Esophagus muscularis mucosa (tissue), 4 donors: ENCODE measurements at regions of chr3 and their contacts with region 1.

Region 1: DNA sequence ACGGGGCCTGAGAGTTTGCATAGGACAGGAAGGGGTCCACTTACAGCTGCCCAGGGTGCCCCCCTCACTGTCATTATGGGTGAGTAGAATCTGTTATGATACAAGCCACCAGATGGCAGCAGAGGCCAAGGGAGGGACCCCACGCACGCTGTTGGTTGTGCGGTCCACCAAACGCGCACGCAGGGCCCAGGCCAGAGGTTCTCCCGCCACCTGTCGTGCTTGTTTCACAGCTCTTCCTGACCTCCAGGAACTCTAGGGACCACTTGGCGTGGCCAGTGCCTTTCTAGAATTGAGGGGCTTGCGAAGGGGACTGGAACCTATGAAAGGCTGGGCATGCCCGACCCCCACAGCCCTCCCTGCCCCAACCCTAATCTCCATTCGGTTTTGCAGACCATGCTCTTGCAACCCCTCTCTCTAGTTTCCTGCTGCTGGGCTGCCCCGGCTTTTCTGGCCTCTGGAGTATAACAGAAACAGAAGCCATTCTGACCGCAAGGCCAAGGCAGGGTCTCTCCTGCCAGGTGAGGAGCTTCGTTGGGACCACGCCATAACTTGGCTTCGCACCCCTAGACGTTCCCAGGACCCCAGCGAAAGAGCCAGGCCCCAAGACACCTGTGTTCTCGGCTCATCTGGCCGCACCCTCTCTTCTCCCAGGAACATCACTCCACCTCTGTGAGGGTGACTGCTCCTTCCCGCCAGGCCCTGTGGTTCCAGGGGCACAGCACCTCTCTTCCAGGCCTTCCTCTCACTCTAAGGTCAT is 46.0 kb downstream of the ALDH1L1 start:
- DNase-seq: peak; percentile 92
- H3K4me3 ChIP-seq: no peak overlapping the region
- H3K27ac ChIP-seq: no peak overlapping the region
- H3K4me1 ChIP-seq: peaks cover 0 to 8% (median 6%) of the 10 kb centered on the region in 4 donors
- H3K27me3 ChIP-seq: no peaks in the 10 kb centered on the region
- CTCF ChIP-seq: peak; percentile 81 to 91 (median 85)
- EP300 ChIP-seq: no peak
- POLR2A ChIP-seq: no peak

Region 2: DNA sequence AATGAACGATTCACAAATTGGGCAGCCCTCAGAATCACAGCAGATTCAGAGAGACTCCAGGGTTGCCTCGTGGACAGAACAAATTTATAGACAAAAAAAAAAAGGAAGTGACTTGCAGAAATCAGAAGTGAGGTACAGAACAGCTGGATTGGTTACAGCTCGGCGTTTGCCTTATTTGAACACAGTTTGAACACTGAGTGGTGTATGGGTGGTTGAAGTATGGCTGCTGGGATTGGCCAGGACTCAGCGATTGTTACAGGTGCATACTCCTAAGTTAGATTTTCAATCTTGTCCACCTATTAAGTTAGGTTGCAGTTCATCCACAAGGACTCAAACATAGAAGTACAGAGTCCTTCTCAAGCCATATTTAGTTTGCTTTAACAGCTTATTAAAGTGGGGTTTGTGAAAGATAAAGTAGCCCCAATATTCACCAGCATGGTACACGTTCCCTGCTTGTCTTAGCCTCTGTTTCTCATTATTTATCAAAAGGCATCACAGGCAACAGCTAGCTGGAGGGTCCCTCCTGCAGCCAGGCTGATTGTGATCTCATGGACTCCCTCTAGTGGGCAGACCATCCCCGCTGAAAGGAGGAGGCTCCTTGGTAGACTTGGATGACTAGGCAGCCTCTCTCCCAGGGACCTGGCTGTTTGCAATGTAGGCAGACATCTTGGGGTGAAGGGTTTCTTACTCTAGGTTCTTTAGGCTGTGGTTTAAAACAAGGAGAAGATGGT is 63.6 kb after region 1 on chr3:
- intact Hi-C with region 1: loop called (anchors 2 kb)
- DNase-seq: peak; percentile 95
- H3K4me3 ChIP-seq: no peak overlapping the region
- H3K27ac ChIP-seq: no peak overlapping the region
- H3K4me1 ChIP-seq: peaks cover 0 to 11% (median 3%) of the 10 kb centered on the region in 4 donors
- H3K27me3 ChIP-seq: no peaks in the 10 kb centered on the region
- CTCF ChIP-seq: peak; percentile 78 to 84 (median 81)
- EP300 ChIP-seq: no peak
- POLR2A ChIP-seq: no peak

Region 3: DNA sequence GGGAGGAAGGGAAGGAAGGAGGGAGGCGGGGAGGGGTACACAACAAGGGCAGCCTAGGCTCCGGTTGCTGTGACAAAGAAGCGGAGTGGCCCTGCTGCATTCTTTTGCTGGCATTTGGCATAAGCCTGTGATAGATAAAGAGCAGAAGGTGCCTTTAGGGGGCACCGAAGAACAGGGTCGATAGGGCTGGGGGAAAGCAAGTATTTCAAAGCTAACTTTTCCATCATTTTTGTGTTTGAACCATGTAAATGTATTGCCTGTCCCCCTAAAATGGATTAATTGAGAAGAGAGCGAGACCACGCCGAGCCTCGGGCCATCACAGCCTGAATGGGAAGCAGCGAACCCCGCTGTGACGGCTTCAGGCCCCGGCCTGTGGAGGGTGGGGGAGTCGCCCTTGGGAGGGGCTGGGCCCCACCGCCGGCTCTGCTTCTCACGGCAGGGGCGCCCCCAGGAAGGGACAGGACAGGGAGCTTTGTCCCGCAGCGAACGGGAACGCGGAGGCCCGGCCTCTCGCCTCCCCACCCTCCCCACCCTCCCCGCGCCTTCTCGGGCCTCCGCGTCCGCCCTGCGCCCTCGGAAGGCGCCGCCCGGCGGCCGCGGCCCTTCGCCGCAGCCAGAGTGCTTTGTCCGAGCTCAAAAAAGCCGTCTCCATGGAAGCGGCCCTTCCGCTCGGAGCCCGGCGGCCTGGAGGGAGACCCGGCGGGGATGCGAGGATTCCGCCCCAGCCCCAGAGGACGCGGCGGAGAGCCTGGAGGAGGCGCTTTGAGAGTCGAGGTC is 78.4 kb after region 1 on chr3:
- intact Hi-C with region 1: loop called (anchors 5 kb)
- DNase-seq: no peak
- H3K4me3 ChIP-seq: peak overlapping the region; percentile 56 to 62 (median 62)
- H3K27ac ChIP-seq: peak overlapping the region; percentile 66 to 83 (median 70)
- H3K4me1 ChIP-seq: peaks cover 18 to 34% (median 26%) of the 10 kb centered on the region in 4 donors
- H3K27me3 ChIP-seq: no peaks in the 10 kb centered on the region
- CTCF ChIP-seq: peak; percentile 45 to 58 (median 46)
- EP300 ChIP-seq: no peak
- POLR2A ChIP-seq: no peak

Region 4: GRCh38 chr3:126389112-126389793 is 254.9 kb after region 1 on chr3:
- intact Hi-C with region 1: loop called (anchors 2 kb)
- DNase-seq: peak; percentile 98
- H3K4me3 ChIP-seq: peak overlapping the region; percentile 46 to 55 (median 54)
- H3K27ac ChIP-seq: peak overlapping the region; percentile 85 to 92 (median 88)
- H3K4me1 ChIP-seq: peaks cover 10 to 18% (median 18%) of the 10 kb centered on the region in 4 donors
- H3K27me3 ChIP-seq: peaks cover 0 to 7% (median 2%) of the 10 kb centered on the region in 4 donors
- CTCF ChIP-seq: peak in 2 of 3 experiments; percentile 99
- EP300 ChIP-seq: peak; percentile 96
- POLR2A ChIP-seq: peak; percentile 45

Region 5: GRCh38 chr3:127574880-127575878 is 1440.8 kb after region 1 on chr3:
- intact Hi-C with region 1: no loop called
- DNase-seq: peak; percentile 97
- H3K4me3 ChIP-seq: no peak overlapping the region
- H3K27ac ChIP-seq: peak overlapping the region in 1 of 4 donors; percentile 43
- H3K4me1 ChIP-seq: peaks cover 6 to 40% (median 14%) of the 10 kb centered on the region in 4 donors
- H3K27me3 ChIP-seq: no peaks in the 10 kb centered on the region
- CTCF ChIP-seq: peak in 2 of 3 experiments; percentile 97 to 98
- EP300 ChIP-seq: no peak
- POLR2A ChIP-seq: no peak